ENCODE measurements at regions of chr17 and their contacts with region 1.

Region 1: GRCh38 chr17:28951991-28952975 is 965 bp upstream of the PHF12 start:
- DNase-seq: peak; percentile 98
- H3K4me3 Mint-ChIP-seq: no peak overlapping the region
- H3K27ac Mint-ChIP-seq: no peak overlapping the region
- H3K4me1 Mint-ChIP-seq: peaks cover 16% of the 10 kb centered on the region
- H3K27me3 Mint-ChIP-seq: no peaks in the 10 kb centered on the region

Region 2: GRCh38 chr17:28598799-28599310 is 353.4 kb before region 1 on chr17 and contains the start of gene SPAG5:
- CTCF ChIA-PET with region 1: no interaction called
- POLR2A ChIA-PET with region 1: no interaction called
- intact Hi-C with region 1: loop called (anchors 5 kb)
- DNase-seq: peak; percentile 97
- H3K4me3 Mint-ChIP-seq: peak within 1 kb of the TSS; percentile 93
- H3K27ac Mint-ChIP-seq: peak within 1 kb of the TSS; percentile 93
- H3K4me1 Mint-ChIP-seq: peaks cover 21% of the 10 kb centered on the region
- H3K27me3 Mint-ChIP-seq: no peaks in the 10 kb centered on the region
- total RNA-seq, gene SPAG5: 153 to 159 TPM

Region 3: DNA sequence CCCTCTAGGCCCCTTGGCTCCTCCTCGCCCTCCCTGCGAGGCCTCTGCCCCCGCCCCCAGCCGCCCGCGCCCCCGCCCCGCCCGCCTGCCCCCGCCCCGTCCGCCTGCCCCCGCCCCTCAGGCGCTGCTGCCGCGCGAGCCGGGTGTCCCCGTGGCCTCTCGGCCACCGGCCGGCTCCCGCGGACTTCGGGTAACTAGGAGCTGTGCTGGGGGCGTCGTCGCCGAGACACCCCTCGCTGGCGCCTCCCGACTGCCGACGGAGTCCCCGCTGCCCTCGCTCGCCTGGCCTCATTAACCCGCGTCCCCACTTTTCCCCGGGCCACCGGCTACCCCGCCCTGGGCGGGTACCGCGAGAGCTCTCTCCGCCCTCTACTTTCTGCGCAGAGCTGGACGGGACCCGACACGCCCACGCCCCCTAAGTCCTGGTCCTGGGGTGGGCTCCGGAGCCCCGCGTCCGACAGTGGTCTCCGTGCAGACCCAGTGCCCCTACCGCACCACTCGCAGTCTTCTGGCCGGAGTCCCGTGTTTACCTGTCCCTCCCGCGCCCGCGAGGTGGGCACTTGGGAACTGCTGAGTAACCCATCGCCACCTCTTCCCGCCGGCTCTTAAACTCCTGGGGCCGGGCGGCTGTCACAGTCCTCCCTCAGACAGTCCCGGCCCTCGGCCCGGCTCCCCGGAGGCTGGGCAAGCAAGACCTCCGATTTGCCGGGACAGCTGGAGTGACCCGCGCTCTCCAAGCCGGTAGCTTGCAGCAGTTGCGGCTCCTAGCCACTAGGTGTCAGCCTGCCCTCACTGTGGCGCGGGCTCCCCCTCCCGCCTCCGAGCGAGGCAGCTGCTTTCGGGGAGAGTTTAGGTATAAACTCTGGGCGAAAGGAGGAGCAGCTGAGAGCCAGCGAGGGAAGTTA is 225.8 kb before region 1 on chr17 and contains the start of gene TLCD1:
- CTCF ChIA-PET with region 1: interaction called, 130 read pairs
- POLR2A ChIA-PET with region 1: interaction called, 29 read pairs
- intact Hi-C with region 1: loop called (anchors 1 kb)
- DNase-seq: peak; percentile 96
- H3K4me3 Mint-ChIP-seq: peak within 1 kb of the TSS; percentile 93
- H3K27ac Mint-ChIP-seq: peak within 1 kb of the TSS; percentile 98
- H3K4me1 Mint-ChIP-seq: peaks cover 47% of the 10 kb centered on the region
- H3K27me3 Mint-ChIP-seq: no peaks in the 10 kb centered on the region
- total RNA-seq, gene TLCD1: 9.1 to 9.5 TPM

Region 4: GRCh38 chr17:28849281-28849680 is 103.0 kb before region 1 on chr17:
- CTCF ChIA-PET with region 1: interaction called, 14 read pairs
- POLR2A ChIA-PET with region 1: no interaction called
- intact Hi-C with region 1: loop called (anchors 2 kb)
- DNase-seq: peak; percentile 43
- H3K4me3 Mint-ChIP-seq: no peak overlapping the region
- H3K27ac Mint-ChIP-seq: no peak overlapping the region
- H3K4me1 Mint-ChIP-seq: peaks cover 4% of the 10 kb centered on the region
- H3K27me3 Mint-ChIP-seq: no peaks in the 10 kb centered on the region

Region 5: GRCh38 chr17:28916302-28916934 is 35.9 kb before region 1 on chr17:
- CTCF ChIA-PET with region 1: interaction called, 13 read pairs
- POLR2A ChIA-PET with region 1: no interaction called
- intact Hi-C with region 1: no loop called
- DNase-seq: peak; percentile 56
- H3K4me3 Mint-ChIP-seq: no peak overlapping the region
- H3K27ac Mint-ChIP-seq: no peak overlapping the region
- H3K4me1 Mint-ChIP-seq: peaks cover 14% of the 10 kb centered on the region
- H3K27me3 Mint-ChIP-seq: no peaks in the 10 kb centered on the region

Region 6: GRCh38 chr17:28982131-28982951 is 30.1 kb after region 1 on chr17:
- CTCF ChIA-PET with region 1: interaction called, 3 read pairs
- POLR2A ChIA-PET with region 1: interaction called, 3 read pairs
- intact Hi-C with region 1: loop called (anchors 1 kb)
- DNase-seq: peak; percentile 66
- H3K4me3 Mint-ChIP-seq: no peak overlapping the region
- H3K27ac Mint-ChIP-seq: peak overlapping the region; percentile 82
- H3K4me1 Mint-ChIP-seq: peaks cover 19% of the 10 kb centered on the region
- H3K27me3 Mint-ChIP-seq: no peaks in the 10 kb centered on the region

Region 7: GRCh38 chr17:29140051-29140621 is 187.9 kb after region 1 on chr17:
- CTCF ChIA-PET with region 1: interaction called, 6 read pairs
- POLR2A ChIA-PET with region 1: interaction called, 4 read pairs
- intact Hi-C with region 1: loop called (anchors 1 kb)
- DNase-seq: peak; percentile 93
- H3K4me3 Mint-ChIP-seq: peak overlapping the region; percentile 93
- H3K27ac Mint-ChIP-seq: peak overlapping the region; percentile 97
- H3K4me1 Mint-ChIP-seq: peaks cover 69% of the 10 kb centered on the region
- H3K27me3 Mint-ChIP-seq: no peaks in the 10 kb centered on the region